GM13977 (cell line): ENCODE measurements at regions of chr10 and their contacts with region 1.

Region 1: GRCh38 chr10:59817773-59818172 is 64.5 kb upstream of the MRLN start:
- DNase-seq: no peak
- CTCF ChIP-seq: no peak

Region 2: DNA sequence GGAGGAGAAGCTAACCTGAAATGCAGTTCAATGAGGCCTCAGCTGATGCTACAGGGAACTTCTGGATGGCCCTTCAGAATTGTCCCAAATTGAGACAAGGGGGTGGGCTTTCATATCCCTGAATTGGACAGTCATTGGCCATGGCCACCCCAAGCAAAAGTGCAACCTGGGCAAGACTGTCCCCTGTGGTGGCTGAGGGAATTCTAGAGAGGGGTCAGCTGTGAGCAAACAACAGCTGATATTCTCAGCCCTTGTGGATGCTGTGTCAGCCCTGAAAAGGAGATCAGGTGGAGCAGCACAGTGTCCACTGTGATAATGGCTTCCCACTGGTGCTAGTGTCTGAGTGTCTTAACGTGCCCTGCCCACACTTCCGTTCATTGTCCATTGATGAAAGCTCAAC is 184.7 kb before region 1 on chr10:
- in situ Hi-C with region 1: loop called (anchors 10 kb)
- DNase-seq: no peak
- CTCF ChIP-seq: no peak